ENCODE measurements at regions of chr1 and their contacts with region 1.

Region 1: GRCh38 chr1:92817986-92818764 is 13.7 kb upstream of the RPL5 start:
- DNase-seq: no peak

Region 2: DNA sequence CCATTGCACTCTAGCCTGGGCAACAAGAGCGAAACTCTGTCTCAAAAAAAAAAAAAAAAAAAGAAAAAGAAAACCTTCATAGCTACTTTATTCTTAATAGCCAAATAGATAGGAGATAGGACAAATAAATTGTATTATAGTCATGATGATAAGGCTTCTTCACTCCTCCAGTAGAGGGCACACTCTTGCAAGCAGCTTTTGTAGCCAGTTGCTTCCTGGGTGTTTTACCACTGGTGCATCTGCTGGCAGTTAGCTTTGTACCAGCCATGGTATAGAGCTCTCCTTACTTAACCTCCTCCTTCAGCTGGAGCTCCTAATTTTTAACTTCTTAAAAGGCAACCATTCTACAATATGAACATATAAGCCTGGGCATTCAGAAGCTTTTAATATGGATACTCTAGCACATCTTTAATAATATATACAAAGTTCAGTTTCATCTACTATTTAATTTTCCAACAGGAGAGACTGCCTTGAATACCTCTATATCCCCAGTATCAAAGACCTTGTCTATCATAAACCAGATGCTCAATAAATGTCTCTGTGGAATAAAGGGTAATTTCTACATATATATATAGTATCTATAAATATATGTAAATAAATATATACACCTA is 69.0 kb before region 1 on chr1:
- intact Hi-C with region 1: loop called (anchors 5 kb)
- DNase-seq: no peak